Activated naive CD4-positive, alpha-beta T cell treated with anti-CD3 and anti-CD28 coated beads for 36 hours (primary cell): ENCODE measurements at regions of chr3 and their contacts with region 1.

Region 1: DNA sequence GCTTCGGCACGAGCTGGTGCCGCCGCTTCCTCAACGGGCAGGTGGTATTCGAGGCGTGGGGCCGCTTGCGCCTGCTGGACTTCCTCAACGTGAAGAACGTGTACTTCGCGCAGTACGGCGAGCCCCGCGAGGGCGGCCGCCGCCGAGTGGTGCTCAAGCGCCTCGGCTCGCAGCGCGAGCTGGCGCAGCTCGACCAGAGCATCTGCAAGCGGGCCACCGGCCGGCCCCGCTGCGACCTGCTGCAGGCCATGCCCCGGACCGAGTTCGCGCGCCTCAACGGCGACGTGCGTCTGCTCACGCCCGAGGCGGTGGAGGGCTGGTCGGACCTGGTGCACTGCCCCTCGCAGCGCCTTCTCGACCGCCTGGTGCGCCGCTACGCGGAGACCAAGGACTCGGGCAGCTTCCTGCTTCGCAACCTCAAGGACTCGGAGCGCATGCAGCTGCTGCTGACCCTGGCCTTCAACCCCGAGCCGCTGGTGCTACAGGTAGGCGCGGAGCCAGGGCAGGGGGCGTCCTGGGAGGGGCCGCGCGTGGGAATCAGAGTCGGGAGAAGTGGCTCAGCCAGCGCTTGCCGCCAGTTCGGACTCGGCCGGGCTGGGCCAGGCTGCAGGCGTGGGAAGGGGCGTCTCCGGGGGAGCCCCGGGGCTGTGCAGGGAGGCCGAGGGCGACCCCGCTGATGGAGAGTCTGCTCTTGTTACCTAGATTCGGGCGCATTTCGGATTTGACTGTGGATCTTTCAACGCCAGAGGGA is 1.1 kb downstream of the DIPK2A start:
- DNase-seq: peak; percentile 54
- H3K4me3 Mint-ChIP-seq: peak overlapping the region; percentile 94
- H3K27ac Mint-ChIP-seq: peak overlapping the region; percentile 92
- H3K4me1 Mint-ChIP-seq: peaks cover 24% of the 10 kb centered on the region
- H3K27me3 Mint-ChIP-seq: peaks cover 3% of the 10 kb centered on the region

Region 2: DNA sequence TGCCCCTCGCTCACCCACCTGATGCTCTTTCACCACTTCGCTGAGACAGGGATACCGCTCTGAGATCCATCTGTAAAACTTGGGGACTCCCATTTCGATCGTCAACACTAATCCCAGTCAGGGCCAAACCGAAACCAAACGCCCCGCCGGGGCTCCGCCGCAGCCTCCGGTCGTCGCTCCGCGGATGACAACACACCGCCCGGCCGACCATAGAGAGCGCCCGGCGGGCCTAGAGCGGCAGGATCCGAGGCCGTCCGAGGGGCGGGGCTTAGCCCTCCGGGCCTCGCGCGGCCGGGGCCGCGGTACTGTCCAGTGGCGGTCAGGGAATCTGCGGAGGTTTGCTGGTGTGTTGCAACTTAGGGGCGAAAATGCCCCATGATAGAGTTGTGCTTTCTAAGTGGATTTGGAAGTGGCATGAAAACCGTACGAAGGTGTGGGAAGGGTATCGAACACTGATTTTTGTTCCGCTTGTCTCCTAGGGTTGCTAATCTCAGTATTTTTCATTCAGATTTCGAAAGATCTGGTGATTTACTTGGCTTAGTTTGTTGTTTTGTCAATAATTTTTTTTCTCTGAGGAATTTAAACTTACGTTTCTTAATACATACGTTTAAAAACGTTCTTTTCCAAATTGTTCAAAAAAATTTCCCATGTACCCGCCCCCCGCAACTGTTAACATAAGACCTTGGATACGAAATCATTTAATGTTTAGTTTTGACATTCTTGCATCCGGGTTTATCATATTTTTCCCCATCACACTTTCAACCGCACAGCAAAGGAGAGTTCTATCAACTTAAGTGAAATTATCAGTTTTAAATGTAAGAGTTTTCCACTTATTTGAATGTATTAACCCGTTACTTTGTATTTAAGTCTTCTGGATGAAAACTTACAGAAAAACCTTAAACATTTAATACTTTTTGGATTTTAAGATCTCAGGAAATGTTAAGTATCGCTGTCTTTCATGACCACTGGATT is 1524.5 kb before region 1 on chr3 and contains the start of gene XRN1:
- CTCF ChIA-PET with region 1: no interaction called
- intact Hi-C with region 1: loop called (anchors 2 kb)
- DNase-seq: peak; percentile 97
- H3K4me3 Mint-ChIP-seq: peak within 1 kb of the TSS; percentile 98
- H3K27ac Mint-ChIP-seq: peak within 1 kb of the TSS; percentile 100
- H3K4me1 Mint-ChIP-seq: peaks cover 27% of the 10 kb centered on the region
- H3K27me3 Mint-ChIP-seq: no peaks in the 10 kb centered on the region
- total RNA-seq, gene XRN1: 63.9 to 64.5 TPM

Region 3: GRCh38 chr3:143001369-143002082 is 971.2 kb before region 1 on chr3 and contains the start of gene U2SURP:
- CTCF ChIA-PET with region 1: interaction called, 3 read pairs
- intact Hi-C with region 1: loop called (anchors 2 kb)
- DNase-seq: peak; percentile 95
- H3K4me3 Mint-ChIP-seq: peak within 1 kb of the TSS; percentile 96
- H3K27ac Mint-ChIP-seq: peak within 1 kb of the TSS; percentile 96
- H3K4me1 Mint-ChIP-seq: peaks cover 31% of the 10 kb centered on the region
- H3K27me3 Mint-ChIP-seq: no peaks in the 10 kb centered on the region
- total RNA-seq, gene U2SURP: 173 to 180 TPM

Region 4: DNA sequence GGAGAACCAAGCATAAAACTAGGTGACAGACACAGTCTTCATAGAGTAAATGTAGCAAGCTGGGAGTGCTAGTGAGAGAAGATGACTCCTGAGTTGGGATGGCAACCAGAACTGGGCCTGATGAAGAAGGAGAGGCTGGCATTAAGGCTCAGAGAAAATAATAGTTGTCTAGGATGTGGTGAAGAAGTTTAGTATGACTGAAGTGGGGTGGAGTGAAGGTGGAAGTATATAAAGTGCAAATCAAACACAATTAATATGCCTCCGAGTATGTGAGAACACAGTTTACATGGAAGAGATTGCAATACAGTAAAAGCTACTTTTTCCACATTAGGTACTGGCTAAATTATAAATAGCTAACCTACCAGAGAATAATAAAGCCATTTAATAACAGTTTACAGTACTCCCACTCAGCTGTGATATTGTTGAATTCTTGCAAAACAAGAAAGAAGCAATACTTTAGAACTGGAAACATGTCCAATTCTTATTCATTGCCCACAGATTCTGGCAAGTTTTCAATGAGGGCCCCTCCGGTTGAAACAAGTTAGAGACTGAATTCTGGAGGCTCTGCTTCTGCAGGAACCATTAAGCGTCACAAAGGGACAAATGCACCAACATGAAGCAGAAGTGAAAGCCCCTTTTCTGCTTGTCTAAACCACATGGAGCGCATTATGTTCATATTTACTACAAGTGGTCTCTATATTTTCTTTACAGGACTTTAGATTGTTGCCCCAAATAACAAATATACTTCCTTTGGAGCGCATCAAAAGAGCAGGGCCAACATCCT is 368.1 kb before region 1 on chr3:
- CTCF ChIA-PET with region 1: no interaction called
- intact Hi-C with region 1: no loop called
- DNase-seq: no peak
- H3K4me3 Mint-ChIP-seq: no peak overlapping the region
- H3K27ac Mint-ChIP-seq: no peak overlapping the region
- H3K4me1 Mint-ChIP-seq: no peaks in the 10 kb centered on the region
- H3K27me3 Mint-ChIP-seq: no peaks in the 10 kb centered on the region

Region 5: GRCh38 chr3:143751643-143752178 is 221.0 kb before region 1 on chr3:
- CTCF ChIA-PET with region 1: no interaction called
- intact Hi-C with region 1: loop called (anchors 1 kb)
- DNase-seq: peak; percentile 57
- H3K4me3 Mint-ChIP-seq: peak overlapping the region; percentile 56
- H3K27ac Mint-ChIP-seq: peak overlapping the region; percentile 81
- H3K4me1 Mint-ChIP-seq: peaks cover 49% of the 10 kb centered on the region
- H3K27me3 Mint-ChIP-seq: no peaks in the 10 kb centered on the region

Region 6: GRCh38 chr3:143831208-143831607 is 141.5 kb before region 1 on chr3:
- CTCF ChIA-PET with region 1: no interaction called
- intact Hi-C with region 1: loop called (anchors 1 kb)
- DNase-seq: peak; percentile 17
- H3K4me3 Mint-ChIP-seq: no peak overlapping the region
- H3K27ac Mint-ChIP-seq: no peak overlapping the region
- H3K4me1 Mint-ChIP-seq: peaks cover 37% of the 10 kb centered on the region
- H3K27me3 Mint-ChIP-seq: no peaks in the 10 kb centered on the region

Region 7: GRCh38 chr3:144032531-144033239 is 60.0 kb after region 1 on chr3:
- CTCF ChIA-PET with region 1: interaction called, 3 read pairs
- intact Hi-C with region 1: loop called (anchors 2 kb)
- DNase-seq: no peak
- H3K4me3 Mint-ChIP-seq: no peak overlapping the region
- H3K27ac Mint-ChIP-seq: no peak overlapping the region
- H3K4me1 Mint-ChIP-seq: peaks cover 5% of the 10 kb centered on the region
- H3K27me3 Mint-ChIP-seq: peaks cover 3% of the 10 kb centered on the region

Region 8: GRCh38 chr3:145013931-145014330 is 1041.3 kb after region 1 on chr3:
- CTCF ChIA-PET with region 1: no interaction called
- intact Hi-C with region 1: loop called (anchors 5 kb)
- DNase-seq: no peak
- H3K4me3 Mint-ChIP-seq: no peak overlapping the region
- H3K27ac Mint-ChIP-seq: no peak overlapping the region
- H3K4me1 Mint-ChIP-seq: no peaks in the 10 kb centered on the region
- H3K27me3 Mint-ChIP-seq: no peaks in the 10 kb centered on the region